WTC11 (cell line): ENCODE measurements at regions of chr6 and their contacts with region 1.

Region 1: DNA sequence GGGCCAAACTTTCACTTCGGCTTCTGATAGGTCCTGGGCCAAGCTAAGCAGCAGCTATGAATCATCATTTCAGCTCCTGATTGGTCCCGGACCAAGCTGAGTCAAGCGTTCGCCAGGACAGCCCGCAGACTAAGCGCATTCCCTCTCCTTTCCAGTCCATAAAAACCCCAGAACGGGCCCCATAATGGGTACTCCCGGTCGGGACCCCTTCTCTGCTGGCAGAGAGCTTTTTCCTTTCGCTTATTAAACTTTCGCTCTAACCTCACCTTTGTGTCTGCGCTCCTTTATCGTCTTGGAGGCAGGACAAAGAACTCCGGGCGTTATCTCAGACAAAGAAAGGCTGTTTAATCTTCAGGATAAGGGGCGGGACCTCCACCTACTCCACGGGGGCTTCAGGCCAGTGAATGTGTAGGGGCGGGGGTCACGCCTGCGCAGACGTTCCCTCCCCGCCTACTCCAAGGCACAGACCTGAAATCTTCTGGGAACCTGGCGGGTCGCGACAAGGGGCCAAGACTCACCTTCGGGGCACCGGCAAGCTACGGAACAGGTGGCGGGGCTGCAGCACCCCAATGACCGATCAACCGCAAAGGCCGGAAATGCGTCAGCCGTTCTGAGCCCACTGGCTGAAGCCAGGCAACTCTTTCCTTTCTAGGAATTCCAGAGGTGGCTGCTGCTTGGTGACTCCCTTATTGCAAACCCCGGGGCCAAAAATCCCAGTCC is at the start of gene ZSCAN31:
- DNase-seq: peak; percentile 87
- ATAC-seq: peak; percentile 96
- H3K4me3 Mint-ChIP-seq: no peak within 1 kb of the TSS
- H3K27ac Mint-ChIP-seq: no peak within 1 kb of the TSS
- H3K4me1 Mint-ChIP-seq: peaks cover 9% of the 10 kb centered on the region
- H3K27me3 Mint-ChIP-seq: peaks cover 11% of the 10 kb centered on the region
- CTCF ChIP-seq: no peak
- total RNA-seq, gene ZSCAN31: 6.6 to 9.1 TPM (median 7.4 TPM) in 3 replicates

Region 2: DNA sequence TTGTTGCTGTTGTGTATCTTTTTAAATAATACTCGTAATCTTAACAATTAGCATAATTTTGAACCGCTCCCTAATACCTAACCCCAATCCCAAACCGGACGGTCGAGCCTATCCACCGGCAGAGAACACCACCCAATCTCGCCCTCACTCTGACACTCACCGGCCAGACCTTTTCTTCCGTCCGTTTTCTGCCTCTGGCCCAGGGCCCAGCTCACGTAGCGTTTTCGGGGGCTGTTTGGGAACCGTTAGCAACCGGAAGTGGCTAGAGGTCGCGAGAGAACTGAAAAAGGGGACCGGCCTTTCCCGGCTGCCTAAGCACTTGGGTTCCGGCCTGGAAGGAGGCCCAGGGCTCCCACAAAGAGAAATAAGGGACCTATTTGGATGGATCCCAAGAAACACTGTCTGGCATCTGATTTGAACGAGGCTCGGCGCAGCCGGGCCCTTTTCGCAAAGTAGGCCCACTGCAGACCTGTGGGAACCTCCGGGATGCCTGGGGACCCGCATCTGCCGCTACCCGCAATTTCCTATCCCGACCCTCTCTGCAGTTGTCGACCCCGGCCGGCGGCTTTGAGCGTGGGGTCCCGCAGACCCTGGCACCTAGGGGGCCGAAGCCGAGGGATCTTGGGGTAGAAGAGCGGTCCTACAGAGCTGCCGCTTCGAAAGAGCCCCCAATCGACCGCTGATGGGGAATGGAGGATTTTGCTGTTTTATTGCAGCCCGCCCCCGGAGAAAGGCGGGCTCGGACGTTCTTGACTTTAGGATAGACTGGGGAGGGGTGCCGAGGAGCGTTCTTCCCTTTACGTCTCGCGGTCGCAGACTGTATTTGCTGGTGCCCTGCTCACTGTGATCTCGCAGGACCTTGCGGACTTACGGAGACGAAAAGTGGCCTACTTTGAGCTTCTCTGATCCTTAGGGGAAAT is 198.9 kb before region 1 on chr6:
- CTCF ChIA-PET with region 1: no interaction called
- POLR2A ChIA-PET with region 1: interaction called, 13 read pairs
- DNase-seq: peak; percentile 86
- ATAC-seq: peak; percentile 75
- H3K4me3 Mint-ChIP-seq: peak overlapping the region; percentile 95
- H3K27ac Mint-ChIP-seq: peak overlapping the region; percentile 92
- H3K4me1 Mint-ChIP-seq: peaks cover 21% of the 10 kb centered on the region
- H3K27me3 Mint-ChIP-seq: peaks cover 34% of the 10 kb centered on the region
- CTCF ChIP-seq: no peak

Region 3: GRCh38 chr6:28347119-28347518 is 11.4 kb after region 1 on chr6:
- CTCF ChIA-PET with region 1: no interaction called
- POLR2A ChIA-PET with region 1: interaction called, 12 read pairs
- DNase-seq: no peak
- ATAC-seq: peak; percentile 13; the same call in 1 of the 2 replicates
- H3K4me3 Mint-ChIP-seq: no peak overlapping the region
- H3K27ac Mint-ChIP-seq: no peak overlapping the region
- H3K4me1 Mint-ChIP-seq: peaks cover 14% of the 10 kb centered on the region
- H3K27me3 Mint-ChIP-seq: peaks cover 43% of the 10 kb centered on the region
- CTCF ChIP-seq: no peak

Region 4: GRCh38 chr6:28383235-28384142 is 47.8 kb after region 1 on chr6:
- CTCF ChIA-PET with region 1: interaction called, 8 read pairs
- POLR2A ChIA-PET with region 1: interaction called, 14 read pairs
- DNase-seq: peak; percentile 94
- ATAC-seq: peak; percentile 93
- H3K4me3 Mint-ChIP-seq: peak overlapping the region; percentile 76
- H3K27ac Mint-ChIP-seq: peak overlapping the region; percentile 98
- H3K4me1 Mint-ChIP-seq: peaks cover 26% of the 10 kb centered on the region
- H3K27me3 Mint-ChIP-seq: no peaks in the 10 kb centered on the region
- CTCF ChIP-seq: peak; percentile 12; the same call in 1 of the 2 replicates

Region 5: GRCh38 chr6:28523241-28523622 is 187.5 kb after region 1 on chr6:
- CTCF ChIA-PET with region 1: no interaction called
- POLR2A ChIA-PET with region 1: no interaction called
- DNase-seq: peak; percentile 28
- ATAC-seq: peak; percentile 94
- H3K4me3 Mint-ChIP-seq: no peak overlapping the region
- H3K27ac Mint-ChIP-seq: no peak overlapping the region
- H3K4me1 Mint-ChIP-seq: peaks cover 9% of the 10 kb centered on the region
- H3K27me3 Mint-ChIP-seq: peaks cover 15% of the 10 kb centered on the region
- CTCF ChIP-seq: no peak